Natural killer cell (primary cell): ENCODE measurements at regions of chr5 and their contacts with region 1.

Region 1: DNA sequence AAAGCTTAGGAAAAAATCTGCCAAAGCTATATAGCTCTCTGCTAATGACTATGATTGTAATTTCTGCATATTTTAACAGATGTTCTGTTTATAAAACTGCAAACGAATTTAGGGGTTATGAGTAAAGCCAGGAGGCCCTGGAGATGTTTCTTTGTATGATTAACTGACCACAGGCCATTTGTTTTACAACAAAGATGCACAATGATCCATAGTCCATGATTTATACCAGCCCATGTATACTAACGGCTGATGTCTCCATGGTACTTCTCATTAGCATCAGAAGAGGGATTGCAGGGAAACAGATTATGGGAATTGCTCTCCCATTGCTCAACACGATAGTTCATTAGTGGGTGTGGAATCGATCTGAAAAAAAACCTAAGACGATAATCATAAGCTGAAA is 78.9 kb downstream of the PPP2R2B start:
- DNase-seq: no peak
- ATAC-seq: no peak
- H3K4me3 ChIP-seq: no peak overlapping the region
- H3K4me3 Mint-ChIP-seq: peak overlapping the region; percentile 83
- H3K27ac ChIP-seq: no peak overlapping the region
- H3K27ac Mint-ChIP-seq: peak overlapping the region; percentile 68 to 81
- H3K4me1 ChIP-seq: peaks cover 10% of the 10 kb centered on the region
- H3K4me1 Mint-ChIP-seq: peaks cover 64 to 69% of the 10 kb centered on the region in 2 donors
- H3K27me3 ChIP-seq: no peaks in the 10 kb centered on the region
- H3K27me3 Mint-ChIP-seq: no peaks in the 10 kb centered on the region
- CTCF ChIP-seq: no peak

Region 2: DNA sequence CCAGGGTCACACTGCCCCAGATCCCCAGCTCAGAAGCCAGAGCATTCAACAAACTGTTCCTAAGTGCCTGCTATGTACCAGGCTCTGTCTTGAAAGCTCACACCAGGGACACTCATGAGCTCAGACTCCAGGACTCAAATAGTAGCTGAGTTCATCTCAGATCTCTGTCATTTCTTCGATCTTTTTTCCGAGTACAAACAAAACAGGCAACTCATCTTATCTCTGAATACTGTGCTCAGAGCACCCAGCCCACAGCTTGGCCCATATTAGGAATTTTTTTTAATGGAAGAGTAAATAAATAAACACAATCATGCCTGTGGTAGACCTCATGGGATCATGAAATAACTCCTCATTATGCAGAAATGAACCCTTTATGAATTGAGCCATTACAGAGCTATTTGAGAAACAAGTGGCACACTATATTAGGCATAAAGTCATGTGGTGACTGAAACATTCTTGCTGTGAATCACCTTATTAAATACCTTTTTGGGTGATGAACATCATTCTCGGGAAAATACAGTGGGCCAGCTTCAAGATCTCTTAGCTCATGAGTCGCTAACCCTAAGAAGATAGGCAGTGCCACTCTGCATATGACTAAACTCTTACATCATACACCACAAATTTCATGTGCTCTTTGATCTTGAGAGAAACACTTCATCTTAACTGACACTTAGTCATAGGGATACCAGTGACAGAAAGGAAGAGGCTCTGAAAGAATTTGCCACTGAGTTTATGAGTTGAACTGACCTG is 853.4 kb before region 1 on chr5:
- intact Hi-C with region 1: no loop called
- DNase-seq: peak in 1 of 2 donors; percentile 23
- ATAC-seq: peak in 1 of 3 donors; percentile 48
- H3K4me3 ChIP-seq: no peak overlapping the region
- H3K4me3 Mint-ChIP-seq: no peak overlapping the region
- H3K27ac ChIP-seq: no peak overlapping the region
- H3K27ac Mint-ChIP-seq: no peak overlapping the region
- H3K4me1 ChIP-seq: no peaks in the 10 kb centered on the region
- H3K4me1 Mint-ChIP-seq: no peaks in the 10 kb centered on the region
- H3K27me3 ChIP-seq: no peaks in the 10 kb centered on the region
- H3K27me3 Mint-ChIP-seq: peaks cover 0 to 11% of the 10 kb centered on the region in 2 donors
- CTCF ChIP-seq: no peak

Region 3: GRCh38 chr5:146529984-146530383 is 269.7 kb before region 1 on chr5:
- intact Hi-C with region 1: no loop called
- DNase-seq: no peak
- ATAC-seq: no peak
- H3K4me3 ChIP-seq: no peak overlapping the region
- H3K4me3 Mint-ChIP-seq: no peak overlapping the region
- H3K27ac ChIP-seq: no peak overlapping the region
- H3K27ac Mint-ChIP-seq: no peak overlapping the region
- H3K4me1 ChIP-seq: no peaks in the 10 kb centered on the region
- H3K4me1 Mint-ChIP-seq: peaks cover 6% of the 10 kb centered on the region in 2 donors
- H3K27me3 ChIP-seq: no peaks in the 10 kb centered on the region
- H3K27me3 Mint-ChIP-seq: peaks cover 2 to 9% of the 10 kb centered on the region in 2 donors
- CTCF ChIP-seq: no peak

Region 4: DNA sequence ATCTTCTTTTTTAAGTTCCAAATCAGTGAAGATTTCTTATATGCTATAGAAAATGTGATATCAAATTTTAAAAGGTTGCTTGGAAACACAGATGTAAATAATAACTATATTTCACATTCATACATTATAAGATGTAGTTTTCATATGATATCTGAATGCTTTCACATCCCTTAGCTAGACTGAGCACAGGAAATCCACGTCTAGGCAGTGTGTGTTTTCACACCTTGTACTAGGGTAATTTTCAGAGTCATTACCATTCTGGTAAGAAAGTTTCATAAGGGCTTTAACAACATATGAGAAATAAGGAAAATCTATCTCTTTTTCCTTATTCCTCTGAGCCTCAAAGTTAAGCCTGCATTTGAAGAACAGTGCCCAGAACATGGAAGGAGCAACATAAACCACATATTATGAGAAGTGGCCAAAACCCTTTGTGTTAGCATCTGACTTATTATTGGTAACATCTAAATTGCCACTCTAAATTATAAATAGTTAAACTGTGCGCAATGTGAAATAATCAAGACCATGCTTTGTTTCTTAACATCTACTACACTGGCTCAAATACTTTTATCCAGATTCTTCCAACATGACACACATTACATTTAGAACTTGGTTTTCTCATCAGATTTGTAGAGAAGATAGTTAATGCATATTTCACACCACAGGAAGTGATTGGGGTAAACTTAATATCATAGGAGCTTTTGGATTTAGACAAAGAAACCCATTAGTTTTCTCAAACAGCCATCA is 34.4 kb before region 1 on chr5:
- intact Hi-C with region 1: loop called (anchors 5 kb)
- DNase-seq: peak in 1 of 2 donors; percentile 65
- ATAC-seq: peak; percentile 93 to 98 (median 96)
- H3K4me3 ChIP-seq: no peak overlapping the region
- H3K4me3 Mint-ChIP-seq: peak overlapping the region; percentile 80
- H3K27ac ChIP-seq: peak overlapping the region; percentile 84
- H3K27ac Mint-ChIP-seq: peak overlapping the region; percentile 90 to 96
- H3K4me1 ChIP-seq: peaks cover 10% of the 10 kb centered on the region
- H3K4me1 Mint-ChIP-seq: peaks cover 53 to 56% of the 10 kb centered on the region in 2 donors
- H3K27me3 ChIP-seq: no peaks in the 10 kb centered on the region
- H3K27me3 Mint-ChIP-seq: no peaks in the 10 kb centered on the region
- CTCF ChIP-seq: no peak